ENCODE measurements at regions of chr15 and their contacts with region 1.

Region 1: DNA sequence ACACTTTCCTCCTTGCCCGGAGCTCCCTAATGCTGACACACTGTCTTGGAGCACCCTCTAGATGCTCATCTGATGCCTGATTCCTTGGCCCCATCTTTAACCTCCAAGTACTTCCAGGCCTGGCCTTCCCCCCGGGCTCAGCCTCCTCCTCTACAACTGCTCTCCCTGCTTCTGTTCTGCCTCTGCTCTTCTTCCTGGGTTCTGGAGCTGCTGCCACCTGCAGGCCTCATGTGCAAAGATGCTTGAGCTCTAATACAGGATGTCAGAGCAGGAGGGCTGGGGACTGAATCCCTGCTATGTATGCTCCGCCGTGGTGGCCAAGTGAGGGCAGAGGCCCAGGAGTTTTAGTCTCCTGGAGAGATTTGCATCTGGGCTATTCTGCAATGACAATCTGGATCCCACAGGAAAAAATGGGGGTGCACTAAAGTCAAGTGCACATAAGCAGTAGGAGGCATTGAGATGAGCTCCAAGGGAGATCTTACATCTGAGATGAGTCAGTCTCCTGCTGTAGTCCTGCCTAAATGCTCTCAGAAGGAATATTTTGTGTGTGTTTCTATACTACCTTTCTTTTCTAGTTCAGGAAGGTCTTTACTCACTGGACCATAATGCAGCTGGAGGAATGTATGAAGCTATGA is 296.3 kb downstream of the UACA start:
- DNase-seq: peak; percentile 75
- ATAC-seq: peak; percentile 84
- H3K4me3 Mint-ChIP-seq: no peak overlapping the region
- H3K27ac Mint-ChIP-seq: no peak overlapping the region
- H3K4me1 Mint-ChIP-seq: peaks cover 7% of the 10 kb centered on the region
- H3K27me3 Mint-ChIP-seq: peaks cover 76% of the 10 kb centered on the region

Region 2: GRCh38 chr15:69576035-69576526 is 890.9 kb before region 1 on chr15:
- CTCF ChIA-PET with region 1: interaction called, 10 read pairs
- POLR2A ChIA-PET with region 1: no interaction called
- DNase-seq: peak; percentile 75
- ATAC-seq: peak; percentile 80
- H3K4me3 Mint-ChIP-seq: no peak overlapping the region
- H3K27ac Mint-ChIP-seq: peak overlapping the region; percentile 48
- H3K4me1 Mint-ChIP-seq: peaks cover 53% of the 10 kb centered on the region
- H3K27me3 Mint-ChIP-seq: peaks cover 15% of the 10 kb centered on the region

Region 3: GRCh38 chr15:70299931-70300869 is 166.8 kb before region 1 on chr15:
- CTCF ChIA-PET with region 1: interaction called, 16 read pairs
- POLR2A ChIA-PET with region 1: no interaction called
- DNase-seq: peak; percentile 90
- ATAC-seq: peak; percentile 99
- H3K4me3 Mint-ChIP-seq: no peak overlapping the region
- H3K27ac Mint-ChIP-seq: peak overlapping the region; percentile 44
- H3K4me1 Mint-ChIP-seq: peaks cover 18% of the 10 kb centered on the region
- H3K27me3 Mint-ChIP-seq: peaks cover 31% of the 10 kb centered on the region

Region 4: GRCh38 chr15:70400766-70401541 is 66.1 kb before region 1 on chr15:
- CTCF ChIA-PET with region 1: no interaction called
- POLR2A ChIA-PET with region 1: no interaction called
- DNase-seq: no peak
- ATAC-seq: no peak
- H3K4me3 Mint-ChIP-seq: no peak overlapping the region
- H3K27ac Mint-ChIP-seq: no peak overlapping the region
- H3K4me1 Mint-ChIP-seq: no peaks in the 10 kb centered on the region
- H3K27me3 Mint-ChIP-seq: peaks cover 49% of the 10 kb centered on the region

Region 5: GRCh38 chr15:70424937-70425411 is 42.0 kb before region 1 on chr15:
- CTCF ChIA-PET with region 1: no interaction called
- POLR2A ChIA-PET with region 1: no interaction called
- DNase-seq: peak; percentile 62
- ATAC-seq: peak; percentile 78
- H3K4me3 Mint-ChIP-seq: peak overlapping the region; percentile 22
- H3K27ac Mint-ChIP-seq: peak overlapping the region; percentile 72
- H3K4me1 Mint-ChIP-seq: peaks cover 32% of the 10 kb centered on the region
- H3K27me3 Mint-ChIP-seq: peaks cover 24% of the 10 kb centered on the region

Region 6: GRCh38 chr15:70453766-70454165 is 13.2 kb before region 1 on chr15:
- CTCF ChIA-PET with region 1: interaction called, 35 read pairs
- POLR2A ChIA-PET with region 1: interaction called, 3 read pairs
- DNase-seq: no peak
- ATAC-seq: no peak
- H3K4me3 Mint-ChIP-seq: no peak overlapping the region
- H3K27ac Mint-ChIP-seq: no peak overlapping the region
- H3K4me1 Mint-ChIP-seq: peaks cover 40% of the 10 kb centered on the region
- H3K27me3 Mint-ChIP-seq: peaks cover 18% of the 10 kb centered on the region

Region 7: DNA sequence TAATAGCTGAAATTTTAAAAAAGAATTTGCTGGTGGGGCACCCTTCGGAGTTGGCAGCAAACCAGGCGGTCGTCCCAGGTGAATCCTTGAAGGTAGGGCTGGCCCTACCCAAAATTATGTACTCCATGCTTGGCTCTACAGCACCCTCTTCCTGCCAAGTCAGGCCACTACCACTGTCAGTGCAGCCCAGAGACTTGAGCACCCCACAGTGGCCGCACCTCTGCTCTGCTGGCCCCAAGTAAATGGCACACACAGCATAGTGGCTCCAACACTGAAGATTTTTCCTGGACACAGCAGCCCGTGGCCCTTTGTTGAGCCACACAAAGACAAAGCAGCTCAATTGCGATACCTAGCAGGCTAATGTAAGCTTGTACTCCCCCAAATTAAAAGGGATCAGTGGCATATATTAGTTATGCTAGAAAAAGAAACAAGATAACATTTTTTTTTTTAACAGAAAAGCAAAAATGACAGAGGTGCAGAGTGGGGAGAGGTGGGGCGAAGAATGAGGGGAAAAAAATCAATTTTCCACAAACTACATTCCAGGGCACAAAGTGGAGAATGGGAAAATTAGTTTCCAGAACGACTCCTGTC is 45.9 kb after region 1 on chr15:
- CTCF ChIA-PET with region 1: interaction called, 33 read pairs
- POLR2A ChIA-PET with region 1: no interaction called
- DNase-seq: peak; percentile 79
- ATAC-seq: peak; percentile 88
- H3K4me3 Mint-ChIP-seq: no peak overlapping the region
- H3K27ac Mint-ChIP-seq: no peak overlapping the region
- H3K4me1 Mint-ChIP-seq: peaks cover 31% of the 10 kb centered on the region
- H3K27me3 Mint-ChIP-seq: peaks cover 27% of the 10 kb centered on the region

Region 8: DNA sequence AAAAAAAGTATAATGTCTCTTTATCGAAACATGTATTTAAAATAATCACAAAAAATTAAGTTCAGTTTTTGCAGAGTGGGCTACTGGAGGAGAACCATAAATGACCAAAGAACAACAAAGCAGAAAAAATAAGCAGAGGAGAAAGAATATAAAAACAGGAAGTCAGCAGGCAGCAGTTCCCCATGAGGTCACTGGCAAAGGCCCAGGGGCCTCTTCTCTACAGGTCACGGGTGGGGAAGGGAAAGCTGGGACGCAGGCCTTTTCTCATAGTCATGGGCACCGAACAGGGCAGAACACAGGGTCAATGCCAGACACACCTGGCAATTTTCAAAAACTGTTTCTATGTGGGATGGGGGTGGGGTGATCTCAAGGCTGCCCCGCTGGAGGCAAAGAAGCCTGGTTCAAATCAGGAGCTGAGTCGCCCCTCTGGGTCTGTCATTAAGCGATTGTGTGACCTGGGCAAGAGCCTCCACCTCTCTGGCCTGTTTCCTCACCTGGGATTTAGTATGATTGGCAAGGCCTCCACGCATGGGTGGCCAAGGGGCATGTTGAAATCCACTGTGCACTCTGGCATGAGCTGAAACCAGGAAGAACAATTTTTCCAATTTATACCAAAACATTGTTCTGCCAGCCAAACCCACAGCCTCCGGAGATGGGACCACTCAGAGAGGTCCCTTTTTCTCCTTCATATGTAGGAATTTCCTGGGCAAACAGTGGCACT is 340.1 kb after region 1 on chr15:
- CTCF ChIA-PET with region 1: no interaction called
- POLR2A ChIA-PET with region 1: no interaction called
- DNase-seq: no peak
- ATAC-seq: no peak
- H3K4me3 Mint-ChIP-seq: no peak overlapping the region
- H3K27ac Mint-ChIP-seq: no peak overlapping the region
- H3K4me1 Mint-ChIP-seq: peaks cover 5% of the 10 kb centered on the region
- H3K27me3 Mint-ChIP-seq: peaks cover 6% of the 10 kb centered on the region